ENCODE measurements at regions of chr9 and their contacts with region 1.

Region 1: GRCh38 chr9:129783516-129784361 is 19.2 kb upstream of the TOR1B start:
- DNase-seq: no peak
- ATAC-seq: peak; percentile 94
- H3K4me3 ChIP-seq: no peak overlapping the region
- H3K27ac ChIP-seq: no peak overlapping the region
- H3K4me1 ChIP-seq: no peaks in the 10 kb centered on the region
- H3K27me3 ChIP-seq: no peaks in the 10 kb centered on the region
- CTCF ChIP-seq: peak; percentile 83

Region 2: GRCh38 chr9:129641746-129642513 is 141.8 kb before region 1 on chr9 and contains the start of gene ASB6:
- CTCF ChIA-PET with region 1: no interaction called
- POLR2A ChIA-PET with region 1: no interaction called
- in situ Hi-C with region 1: no loop called
- intact Hi-C with region 1: loop called (anchors 5 kb)
- DNase-seq: peak; percentile 58
- ATAC-seq: peak; percentile 94
- H3K4me3 ChIP-seq: peak within 1 kb of the TSS; percentile 80 to 84
- H3K27ac ChIP-seq: peak within 1 kb of the TSS; percentile 70
- H3K4me1 ChIP-seq: no peaks in the 10 kb centered on the region
- H3K27me3 ChIP-seq: no peaks in the 10 kb centered on the region
- CTCF ChIP-seq: peak; percentile 98
- total RNA-seq, gene ASB6: 14.3 TPM

Region 3: GRCh38 chr9:129737479-129738274 is 46.1 kb before region 1 on chr9:
- CTCF ChIA-PET with region 1: interaction called, 5 read pairs
- POLR2A ChIA-PET with region 1: no interaction called
- in situ Hi-C with region 1: no loop called
- intact Hi-C with region 1: loop called (anchors 2 kb)
- DNase-seq: no peak
- ATAC-seq: peak; percentile 96
- H3K4me3 ChIP-seq: peak overlapping the region; percentile 44 to 49
- H3K27ac ChIP-seq: peak overlapping the region; percentile 42
- H3K4me1 ChIP-seq: no peaks in the 10 kb centered on the region
- H3K27me3 ChIP-seq: no peaks in the 10 kb centered on the region
- CTCF ChIP-seq: peak; percentile 89

Region 4: DNA sequence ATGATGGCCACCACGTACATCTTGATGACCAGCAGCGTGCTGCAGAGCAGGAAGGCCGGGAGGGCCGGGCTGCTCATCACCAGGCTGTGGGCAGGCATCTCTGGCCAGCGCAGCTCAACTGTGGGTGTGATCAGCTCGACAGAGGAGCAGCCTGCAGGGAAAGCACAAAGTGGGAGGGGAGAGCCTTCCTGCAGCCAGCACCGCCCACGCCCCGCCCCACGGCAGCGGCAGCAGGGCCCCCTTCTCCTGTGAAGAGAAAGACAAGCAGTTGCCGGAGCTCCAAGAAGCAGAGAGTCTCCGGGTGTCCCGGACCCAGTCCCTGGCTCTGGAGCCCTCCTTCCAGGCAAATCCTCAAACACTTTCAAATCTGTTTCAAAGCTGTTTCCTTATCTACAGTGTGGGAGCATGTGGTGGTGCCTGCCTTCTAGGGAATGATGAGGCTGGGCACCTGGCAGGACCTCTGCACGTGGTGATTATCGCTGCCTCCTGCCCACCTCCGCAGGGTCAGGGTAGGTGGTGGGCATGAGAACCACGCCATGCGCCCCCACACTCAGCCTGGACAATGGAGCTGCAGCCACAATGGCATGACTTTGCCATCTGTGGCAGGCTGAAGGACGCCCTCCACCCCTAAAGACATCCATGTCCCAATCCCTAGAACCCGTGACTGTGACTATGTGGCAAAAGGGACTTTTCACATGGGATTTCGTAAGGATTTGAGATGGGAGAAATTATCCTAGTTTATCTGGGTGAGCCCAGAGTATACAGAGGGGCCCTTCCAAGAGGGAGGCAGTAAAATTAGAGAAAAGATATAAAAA is 30.6 kb before region 1 on chr9 and contains the start of gene PTGES:
- CTCF ChIA-PET with region 1: interaction called, 12 read pairs
- POLR2A ChIA-PET with region 1: no interaction called
- in situ Hi-C with region 1: no loop called
- intact Hi-C with region 1: no loop called
- DNase-seq: no peak
- ATAC-seq: peak; percentile 93
- H3K4me3 ChIP-seq: peak within 1 kb of the TSS; percentile 17 to 42
- H3K27ac ChIP-seq: no peak within 1 kb of the TSS
- H3K4me1 ChIP-seq: no peaks in the 10 kb centered on the region; the same call in none of the 2 replicates
- H3K27me3 ChIP-seq: no peaks in the 10 kb centered on the region
- CTCF ChIP-seq: no peak
- total RNA-seq, gene PTGES: 1.1 TPM

Region 5: GRCh38 chr9:129763264-129763926 is 20.3 kb before region 1 on chr9:
- CTCF ChIA-PET with region 1: no interaction called
- POLR2A ChIA-PET with region 1: no interaction called
- in situ Hi-C with region 1: no loop called
- intact Hi-C with region 1: no loop called
- DNase-seq: no peak
- ATAC-seq: no peak
- H3K4me3 ChIP-seq: no peak overlapping the region
- H3K27ac ChIP-seq: no peak overlapping the region
- H3K4me1 ChIP-seq: peaks cover 4% of the 10 kb centered on the region; the same call in 1 of the 2 replicates
- H3K27me3 ChIP-seq: no peaks in the 10 kb centered on the region
- CTCF ChIP-seq: no peak

Region 6: DNA sequence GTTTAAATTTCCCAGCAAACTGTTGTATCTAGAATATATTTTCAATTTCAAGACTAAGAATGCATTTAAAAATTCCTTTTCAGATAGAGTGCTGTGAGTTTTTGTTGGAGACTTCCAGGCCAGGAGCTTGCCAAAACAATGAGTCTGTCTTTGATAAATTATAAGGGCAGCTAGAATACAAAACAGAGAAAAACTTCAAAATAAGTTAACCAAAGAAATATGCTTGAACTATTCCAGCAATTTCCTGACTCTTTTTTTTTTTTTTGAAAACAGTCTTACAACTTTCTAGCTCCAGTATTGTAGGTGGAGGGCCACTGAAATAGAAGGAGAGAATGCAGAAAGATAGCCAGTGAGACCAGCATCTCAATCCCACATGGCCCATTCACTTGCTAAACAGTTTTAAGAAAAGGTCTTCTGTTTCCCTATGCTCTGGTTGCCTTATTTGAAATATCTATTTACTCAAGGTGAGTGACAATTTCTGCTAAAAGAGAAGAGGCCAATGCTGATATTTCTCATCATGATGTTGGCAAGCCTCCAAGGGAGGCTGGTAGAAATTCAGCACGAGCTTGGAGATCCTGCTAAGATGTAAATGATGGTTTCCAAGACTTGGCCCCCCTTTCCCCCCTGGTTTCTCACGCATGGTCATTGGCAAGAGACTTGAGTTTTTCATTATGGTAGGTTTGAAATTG is 154.7 kb after region 1 on chr9:
- CTCF ChIA-PET with region 1: no interaction called
- POLR2A ChIA-PET with region 1: no interaction called
- in situ Hi-C with region 1: no loop called
- intact Hi-C with region 1: no loop called
- DNase-seq: no peak
- ATAC-seq: no peak
- H3K4me3 ChIP-seq: no peak overlapping the region
- H3K27ac ChIP-seq: no peak overlapping the region
- H3K4me1 ChIP-seq: no peaks in the 10 kb centered on the region
- H3K27me3 ChIP-seq: no peaks in the 10 kb centered on the region
- CTCF ChIP-seq: no peak

Measured in Panc1 (cell line).